Panc1 (cell line): ENCODE measurements at regions of chr13 and their contacts with region 1.

Region 1: DNA sequence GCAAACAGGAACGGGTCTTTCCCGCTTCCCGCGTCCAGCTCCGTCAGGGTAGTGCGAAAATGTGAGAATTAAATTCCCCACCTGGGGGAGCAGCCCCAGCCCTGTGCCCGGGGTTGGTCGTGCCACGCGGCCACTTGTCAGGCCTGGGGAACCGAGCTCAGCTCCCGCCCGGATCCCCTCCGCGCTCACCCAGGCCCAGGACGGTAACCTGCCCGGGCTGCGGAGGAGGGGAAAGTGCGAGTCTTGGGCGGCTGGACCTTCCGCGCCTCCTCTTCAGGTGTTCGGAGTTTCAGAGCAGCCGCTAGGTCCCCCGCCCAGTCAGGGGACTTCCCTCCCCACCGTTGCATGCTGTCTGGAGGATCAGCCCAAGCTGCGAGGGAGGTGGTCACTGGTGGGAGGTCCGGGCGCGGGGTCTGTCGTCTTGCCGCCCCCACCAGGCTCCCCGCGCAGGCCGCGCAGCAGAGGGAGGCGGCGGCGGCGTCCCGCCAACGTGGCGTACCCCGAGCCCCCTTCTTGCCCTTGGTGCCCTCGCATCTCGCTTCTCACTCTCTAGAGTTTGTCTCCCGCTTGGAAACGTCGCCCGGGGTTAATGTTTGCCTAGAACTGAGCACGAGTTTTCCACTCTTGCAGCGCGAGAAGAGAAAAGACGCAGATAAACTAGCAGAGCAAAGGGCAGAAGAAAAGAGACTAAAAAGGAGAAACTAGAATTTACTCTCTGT is 8.1 kb downstream of the URAD start:
- DNase-seq: no peak
- ATAC-seq: no peak
- H3K4me3 ChIP-seq: no peak overlapping the region
- H3K27ac ChIP-seq: no peak overlapping the region
- H3K4me1 ChIP-seq: no peaks in the 10 kb centered on the region
- H3K27me3 ChIP-seq: no peaks in the 10 kb centered on the region
- CTCF ChIP-seq: no peak

Region 2: GRCh38 chr13:27389891-27390290 is 590.5 kb before region 1 on chr13:
- CTCF ChIA-PET with region 1: no interaction called
- POLR2A ChIA-PET with region 1: interaction called, 12 read pairs
- in situ Hi-C with region 1: no loop called
- intact Hi-C with region 1: no loop called
- DNase-seq: no peak
- ATAC-seq: no peak
- H3K4me3 ChIP-seq: no peak overlapping the region
- H3K27ac ChIP-seq: no peak overlapping the region
- H3K4me1 ChIP-seq: no peaks in the 10 kb centered on the region
- H3K27me3 ChIP-seq: no peaks in the 10 kb centered on the region
- CTCF ChIP-seq: no peak

Region 3: GRCh38 chr13:27533155-27533643 is 447.2 kb before region 1 on chr13:
- CTCF ChIA-PET with region 1: no interaction called
- POLR2A ChIA-PET with region 1: no interaction called
- in situ Hi-C with region 1: no loop called
- intact Hi-C with region 1: loop called (anchors 10 kb)
- DNase-seq: peak; percentile 20
- ATAC-seq: peak; percentile 99
- H3K4me3 ChIP-seq: peak overlapping the region; percentile 23 to 54; a peak in 3 of 4 replicates
- H3K27ac ChIP-seq: no peak overlapping the region
- H3K4me1 ChIP-seq: peaks cover 3% of the 10 kb centered on the region; the same call in 1 of the 2 replicates
- H3K27me3 ChIP-seq: no peaks in the 10 kb centered on the region
- CTCF ChIP-seq: peak; percentile 92

Region 4: DNA sequence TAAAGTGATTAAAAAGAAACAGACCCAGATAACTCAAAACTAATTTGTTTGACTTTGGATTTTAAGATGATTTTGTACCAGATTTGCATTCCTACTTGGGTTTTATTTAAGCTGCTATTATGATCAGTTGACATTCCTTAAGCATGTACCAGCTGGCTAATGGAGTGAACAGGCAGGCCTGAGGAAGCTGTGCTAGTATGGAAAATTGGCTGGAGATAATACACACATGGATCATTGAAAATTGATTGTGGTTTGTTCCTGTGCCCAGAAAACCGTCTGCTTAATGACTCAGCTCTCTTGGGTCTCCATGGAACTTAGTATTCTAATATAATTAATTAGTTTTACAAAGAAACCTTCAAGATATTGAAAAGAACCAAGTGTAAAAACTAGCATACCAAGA is 336.1 kb before region 1 on chr13:
- CTCF ChIA-PET with region 1: no interaction called
- POLR2A ChIA-PET with region 1: no interaction called
- in situ Hi-C with region 1: no loop called
- intact Hi-C with region 1: no loop called
- DNase-seq: no peak
- ATAC-seq: no peak
- H3K4me3 ChIP-seq: no peak overlapping the region
- H3K27ac ChIP-seq: no peak overlapping the region
- H3K4me1 ChIP-seq: no peaks in the 10 kb centered on the region
- H3K27me3 ChIP-seq: no peaks in the 10 kb centered on the region
- CTCF ChIP-seq: no peak